ENCODE measurements at regions of chr20 and their contacts with region 1.

Region 1: GRCh38 chr20:19937218-19937617 is 79.9 kb upstream of the NAA20 start:
- DNase-seq: no peak
- H3K4me3 Mint-ChIP-seq: peak overlapping the region; percentile 33
- H3K27ac Mint-ChIP-seq: no peak overlapping the region
- H3K4me1 Mint-ChIP-seq: peaks cover 17% of the 10 kb centered on the region
- H3K27me3 Mint-ChIP-seq: peaks cover 50% of the 10 kb centered on the region

Region 2: GRCh38 chr20:19828232-19828631 is 109.0 kb before region 1 on chr20:
- intact Hi-C with region 1: loop called (anchors 1 kb)
- DNase-seq: no peak
- H3K4me3 Mint-ChIP-seq: no peak overlapping the region
- H3K27ac Mint-ChIP-seq: no peak overlapping the region
- H3K4me1 Mint-ChIP-seq: peaks cover 15% of the 10 kb centered on the region
- H3K27me3 Mint-ChIP-seq: no peaks in the 10 kb centered on the region

Region 3: GRCh38 chr20:19915111-19915798 is 22.0 kb before region 1 on chr20:
- intact Hi-C with region 1: no loop called
- DNase-seq: no peak
- H3K4me3 Mint-ChIP-seq: no peak overlapping the region
- H3K27ac Mint-ChIP-seq: no peak overlapping the region
- H3K4me1 Mint-ChIP-seq: no peaks in the 10 kb centered on the region
- H3K27me3 Mint-ChIP-seq: peaks cover 8% of the 10 kb centered on the region

Region 4: DNA sequence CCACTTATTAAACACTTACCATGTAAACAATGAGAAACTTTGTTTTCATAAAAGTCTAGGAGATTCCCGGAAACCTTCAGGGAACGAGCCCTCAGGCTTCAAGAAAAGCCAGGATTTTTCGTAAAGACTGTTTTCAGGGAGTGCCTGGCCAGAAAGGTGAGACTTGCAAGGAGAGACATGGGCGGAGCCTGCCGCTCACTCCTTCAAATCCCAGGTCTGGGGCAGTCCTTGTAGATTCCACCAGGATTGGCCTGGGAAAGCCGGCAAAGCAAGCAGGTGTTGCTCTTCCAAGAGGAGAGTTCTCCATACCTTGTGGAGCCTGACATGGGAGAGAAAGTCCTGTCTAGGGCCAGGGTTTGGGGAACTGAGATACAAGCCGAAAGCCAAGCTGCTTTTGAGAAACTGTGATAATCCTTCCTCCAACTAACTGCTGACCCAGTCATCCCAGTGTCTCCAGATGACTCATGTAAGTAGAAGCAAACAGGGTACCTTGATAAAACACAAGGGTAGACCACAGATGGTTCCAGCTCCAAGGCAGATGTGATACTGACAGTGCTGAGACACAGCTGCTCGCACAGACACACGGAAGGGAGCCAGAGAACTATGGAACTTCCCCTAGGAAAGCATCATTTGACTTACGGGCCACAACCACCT is 10.5 kb after region 1 on chr20:
- intact Hi-C with region 1: loop called (anchors 1 kb)
- DNase-seq: no peak
- H3K4me3 Mint-ChIP-seq: no peak overlapping the region
- H3K27ac Mint-ChIP-seq: no peak overlapping the region
- H3K4me1 Mint-ChIP-seq: peaks cover 22% of the 10 kb centered on the region
- H3K27me3 Mint-ChIP-seq: peaks cover 9% of the 10 kb centered on the region

Measured in activated T-helper 2 cell treated with anti-CD3 and anti-CD28 coated beads, Interferon-gamma antibody, Interleukin-2, Interleukin-4, amounts not matched to agents 10 μg/mL and 5 μg/mL and 100 μg/mL, durations not matched to agents 14 hours and 24 hours and 36 hours (primary cell).